MCF 10A (cell line): ENCODE measurements at regions of chr19 and their contacts with region 1.

Region 1: DNA sequence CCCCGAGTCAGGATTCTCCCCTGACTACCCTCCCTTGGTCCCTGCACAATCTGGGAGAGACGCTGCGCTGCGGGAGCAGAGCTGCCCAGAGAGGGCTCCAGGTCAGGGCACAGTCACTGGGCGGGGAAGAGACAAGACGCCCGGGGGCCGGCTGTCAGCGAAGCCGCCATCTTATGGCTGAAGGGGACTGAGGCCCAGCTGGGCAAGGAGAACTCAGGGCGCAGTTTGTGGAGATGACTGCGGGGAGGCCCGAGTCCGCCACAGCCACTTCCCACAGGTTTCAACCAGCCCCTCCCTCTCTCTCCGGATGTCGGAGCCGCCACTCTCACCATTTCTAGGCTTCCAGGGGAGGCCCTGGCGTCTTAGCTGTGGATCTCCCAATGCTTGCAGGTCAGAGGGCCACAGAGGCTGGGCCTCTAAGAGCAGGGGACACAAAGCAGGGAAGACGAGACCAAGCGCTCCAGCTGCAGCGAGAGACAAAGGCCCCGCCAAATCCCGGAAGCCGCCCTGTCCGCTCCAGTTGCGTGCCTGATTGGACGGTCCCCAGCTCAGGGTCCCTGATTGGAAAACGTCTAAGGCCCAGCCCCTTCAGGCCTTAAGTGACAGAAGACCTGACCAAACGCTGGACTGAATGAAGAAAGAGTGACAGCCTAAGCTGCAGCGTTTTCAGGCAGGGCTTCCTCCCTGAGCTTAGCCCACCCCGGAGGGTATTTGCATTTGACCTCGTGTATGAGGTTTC is at the start of gene ZNF724:
- DNase-seq: peak; percentile 99
- H3K4me3 Mint-ChIP-seq: peak within 1 kb of the TSS; percentile 84
- H3K27ac Mint-ChIP-seq: peak within 1 kb of the TSS; percentile 73
- H3K4me1 Mint-ChIP-seq: no peaks in the 10 kb centered on the region
- H3K27me3 Mint-ChIP-seq: no peaks in the 10 kb centered on the region
- CTCF ChIP-seq: no peak
- total RNA-seq, gene ZNF724: 5.3 and 6.9 TPM in 2 replicates

Region 2: DNA sequence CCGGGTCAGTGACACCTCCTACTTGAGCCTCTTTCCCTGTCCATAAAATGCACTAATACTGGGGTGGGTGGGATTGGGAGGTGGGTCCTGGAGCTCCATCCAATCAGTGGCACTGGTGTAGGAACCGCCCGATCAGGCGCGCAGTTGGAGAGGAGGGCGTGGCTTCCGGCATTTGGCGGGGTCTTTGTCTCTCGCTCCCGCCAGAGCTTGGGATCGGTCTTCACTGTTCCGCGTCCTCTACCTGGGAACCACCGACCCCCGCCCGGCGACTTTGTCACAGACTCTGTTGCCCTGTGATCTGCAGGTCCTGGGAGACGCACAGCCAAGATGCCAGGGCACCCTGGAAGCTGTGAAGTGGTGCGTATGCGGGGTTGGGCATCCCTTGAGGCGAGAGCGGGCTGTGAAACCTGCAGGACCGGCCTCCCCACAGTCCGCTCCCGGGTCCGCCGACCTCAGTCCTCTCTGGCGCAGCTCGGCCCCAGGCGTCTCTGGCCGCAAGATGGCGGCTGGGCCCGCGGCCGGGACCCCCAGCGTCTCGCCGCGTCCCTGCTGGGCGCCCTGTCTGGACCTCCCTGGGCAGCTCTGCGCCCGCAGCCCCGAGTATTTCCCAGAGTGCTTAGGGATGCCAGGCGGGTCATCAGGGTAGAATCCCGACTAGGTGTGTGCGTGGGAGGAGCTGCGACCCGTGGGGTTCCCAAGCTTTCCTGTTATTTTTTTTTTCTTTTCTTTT is 174.9 kb before region 1 on chr19:
- CTCF ChIA-PET with region 1: no interaction called
- POLR2A ChIA-PET with region 1: no interaction called
- intact Hi-C with region 1: no loop called
- DNase-seq: no peak
- H3K4me3 Mint-ChIP-seq: no peak overlapping the region
- H3K27ac Mint-ChIP-seq: no peak overlapping the region
- H3K4me1 Mint-ChIP-seq: no peaks in the 10 kb centered on the region
- H3K27me3 Mint-ChIP-seq: no peaks in the 10 kb centered on the region
- CTCF ChIP-seq: no peak

Region 3: DNA sequence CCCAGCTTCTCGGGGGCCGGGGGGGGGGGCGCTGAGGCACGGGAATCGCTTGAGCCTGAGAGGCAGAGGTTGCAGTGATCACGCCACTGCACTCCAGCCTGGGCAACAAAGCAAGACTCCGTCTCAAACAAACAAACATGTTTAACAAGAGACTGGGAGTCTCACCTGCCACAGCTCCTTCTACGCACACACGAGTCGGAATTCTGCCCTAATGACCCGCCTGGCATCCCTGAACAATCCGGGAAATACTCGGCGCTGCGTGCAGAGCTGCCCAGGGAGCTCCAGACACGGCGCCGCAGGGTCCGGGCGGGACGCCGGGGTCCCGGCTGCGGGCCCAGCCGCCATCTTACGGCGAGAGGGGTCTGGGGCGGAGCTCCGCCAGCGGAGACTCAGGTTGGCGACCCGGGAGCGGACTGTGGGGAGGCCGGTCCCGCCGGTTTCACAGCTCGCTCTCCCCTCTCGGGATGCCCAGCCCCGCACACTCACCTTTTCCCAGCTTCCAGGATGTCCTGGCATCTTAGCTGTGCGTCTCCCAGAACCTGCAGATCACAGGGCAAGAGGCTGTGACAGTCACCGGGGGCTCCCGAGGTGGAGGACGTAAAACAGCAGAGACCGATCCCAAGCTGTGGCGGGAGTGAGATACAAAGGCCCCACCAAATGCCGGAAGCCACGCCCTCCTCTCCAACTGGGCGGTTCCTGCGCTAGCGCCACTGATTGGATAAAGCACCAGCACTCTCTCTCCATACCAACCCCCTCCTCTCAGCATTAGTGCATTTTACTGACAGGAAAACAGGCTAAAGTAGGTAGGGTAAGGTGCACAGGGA is 23.7 kb after region 1 on chr19:
- CTCF ChIA-PET with region 1: interaction called, 4 read pairs
- POLR2A ChIA-PET with region 1: interaction called, 30 read pairs
- intact Hi-C with region 1: no loop called
- DNase-seq: peak; percentile 92
- H3K4me3 Mint-ChIP-seq: peak overlapping the region; percentile 90
- H3K27ac Mint-ChIP-seq: peak overlapping the region; percentile 80
- H3K4me1 Mint-ChIP-seq: no peaks in the 10 kb centered on the region
- H3K27me3 Mint-ChIP-seq: no peaks in the 10 kb centered on the region
- CTCF ChIP-seq: no peak